ENCODE measurements at regions of chr20 and their contacts with region 1.

Region 1: DNA sequence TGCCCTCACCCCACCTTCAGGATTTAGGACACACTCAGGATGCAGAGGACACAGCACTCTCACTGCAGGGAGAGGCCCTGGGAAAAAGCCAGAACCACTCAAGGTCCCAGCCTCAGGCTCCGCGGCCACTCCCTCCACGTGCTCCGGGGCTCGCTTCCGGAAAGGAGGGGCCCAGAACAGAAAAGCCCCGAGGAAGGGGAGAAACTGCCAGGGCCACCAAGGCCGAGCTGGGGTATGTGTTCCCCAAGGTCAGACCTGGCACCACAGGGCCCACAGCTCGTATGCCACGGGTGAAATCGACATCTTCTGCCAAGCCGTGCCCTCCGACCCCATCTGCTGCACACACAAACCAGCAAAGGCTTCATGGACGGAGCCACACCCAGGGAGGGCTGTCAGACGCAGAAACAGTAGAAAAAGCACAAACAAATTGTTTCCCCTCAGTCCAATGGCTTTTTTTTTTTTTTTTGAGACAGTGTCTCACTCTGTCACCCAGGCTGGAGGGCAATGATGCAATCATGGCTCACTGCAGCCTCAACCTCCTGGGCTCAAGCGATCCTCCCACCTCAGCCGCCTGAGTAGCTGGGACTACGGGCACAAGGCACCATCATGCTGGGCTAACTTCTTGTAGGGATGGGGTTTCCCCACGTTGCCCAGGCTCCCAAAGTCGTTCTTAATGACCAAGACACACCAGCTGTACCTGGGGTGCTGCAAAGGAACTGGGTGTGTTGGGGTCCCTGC is 33.4 kb downstream of the SLC2A4RG start:
- DNase-seq: no peak
- ATAC-seq: no peak
- H3K4me3 ChIP-seq: no peak overlapping the region
- H3K27ac ChIP-seq: no peak overlapping the region
- H3K4me1 ChIP-seq: no peaks in the 10 kb centered on the region
- H3K27me3 ChIP-seq: no peaks in the 10 kb centered on the region
- CTCF ChIP-seq: no peak
- POLR2A ChIP-seq: no peak

Region 2: DNA sequence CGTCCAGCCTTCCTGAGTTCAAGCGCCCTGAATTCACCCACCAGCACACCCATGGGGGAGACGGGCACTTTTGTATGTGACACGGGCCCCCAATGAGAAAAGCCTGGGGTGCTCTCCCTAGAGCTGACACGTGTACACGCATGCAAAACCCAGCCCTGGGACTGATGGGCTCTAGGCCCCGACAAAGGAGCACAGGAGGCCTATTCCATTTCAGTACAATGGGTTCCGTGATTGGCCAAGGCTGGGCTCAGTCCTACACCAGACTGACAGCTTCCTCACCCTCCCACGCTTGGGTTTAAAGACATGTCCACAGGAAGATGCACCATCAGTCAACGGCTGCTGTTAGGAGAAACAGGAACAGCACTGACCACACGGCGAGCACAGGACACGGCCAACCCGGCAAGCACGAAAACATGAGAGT is 49.3 kb after region 1 on chr20:
- in situ Hi-C with region 1: no loop called
- intact Hi-C with region 1: loop called (anchors 5 kb)
- DNase-seq: no peak
- ATAC-seq: no peak
- H3K4me3 ChIP-seq: no peak overlapping the region
- H3K27ac ChIP-seq: peak overlapping the region in 2 of 4 donors; percentile 11 to 18
- H3K4me1 ChIP-seq: peaks cover 0 to 7% of the 10 kb centered on the region in 2 donors
- H3K27me3 ChIP-seq: no peaks in the 10 kb centered on the region
- CTCF ChIP-seq: no peak
- POLR2A ChIP-seq: no peak

Region 3: GRCh38 chr20:63934271-63935068 is 161.5 kb after region 1 on chr20:
- in situ Hi-C with region 1: no loop called
- intact Hi-C with region 1: no loop called
- DNase-seq: no peak
- ATAC-seq: no peak
- H3K4me3 ChIP-seq: no peak overlapping the region
- H3K27ac ChIP-seq: no peak overlapping the region
- H3K4me1 ChIP-seq: peaks cover 0 to 8% of the 10 kb centered on the region in 2 donors
- H3K27me3 ChIP-seq: no peaks in the 10 kb centered on the region
- CTCF ChIP-seq: no peak
- POLR2A ChIP-seq: no peak

Measured in gastrocnemius medialis (tissue), 4 donors.